CD8-positive, alpha-beta memory T cell (primary cell): ENCODE measurements at regions of chr1 and their contacts with region 1.

Region 1: DNA sequence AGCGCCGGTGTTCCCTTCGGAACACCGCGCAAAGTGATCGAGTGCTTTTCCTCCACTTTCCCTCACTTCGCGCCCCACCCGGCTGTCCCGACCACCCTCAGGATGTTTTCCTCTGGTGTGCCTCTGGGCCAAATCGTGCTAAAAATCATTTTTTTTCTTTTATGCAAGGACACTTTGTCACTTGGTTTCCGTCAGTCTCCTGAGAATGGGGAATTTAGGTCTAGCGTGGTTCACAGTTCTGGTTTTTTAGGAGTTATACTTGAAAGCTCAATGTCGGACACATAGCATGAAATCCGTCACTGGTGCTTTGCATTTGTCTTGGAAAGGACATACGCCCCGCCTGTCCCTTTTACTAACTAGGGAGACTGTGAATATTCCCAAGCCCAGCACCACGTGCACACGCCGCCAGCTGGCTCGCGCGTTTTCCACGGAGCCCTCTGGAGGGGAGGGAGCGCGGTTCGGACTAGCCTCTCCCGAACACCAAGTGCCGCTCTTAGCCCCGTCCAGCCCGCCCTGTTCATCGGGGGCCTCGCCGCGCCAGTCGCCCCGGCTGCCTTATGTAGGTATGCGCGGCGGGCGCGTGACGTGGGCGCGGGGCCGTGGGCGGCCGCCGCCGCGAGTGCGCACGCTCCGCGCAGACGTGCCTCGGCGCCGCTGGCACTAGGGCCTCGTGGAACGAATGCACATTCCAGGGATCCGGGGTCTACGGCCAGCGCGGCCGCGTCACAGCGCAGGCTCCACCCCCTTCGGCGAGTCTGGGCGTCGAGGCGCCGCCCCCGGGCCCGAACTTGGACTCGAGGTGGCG is 572 bp upstream of the IRF2BP2 start:
- DNase-seq: peak; percentile 85 to 94 (median 92)
- H3K4me3 ChIP-seq: peak overlapping the region; percentile 88
- H3K4me3 Mint-ChIP-seq: peak overlapping the region; percentile 90 to 99 (median 96)
- H3K27ac ChIP-seq: peak overlapping the region; percentile 96
- H3K27ac Mint-ChIP-seq: peak overlapping the region; percentile 95 to 100 (median 99)
- H3K4me1 ChIP-seq: peaks cover 52% of the 10 kb centered on the region
- H3K4me1 Mint-ChIP-seq: peaks cover 47 to 58% (median 57%) of the 10 kb centered on the region in 3 donors
- H3K27me3 ChIP-seq: no peaks in the 10 kb centered on the region
- H3K27me3 Mint-ChIP-seq: peaks cover 0 to 15% of the 10 kb centered on the region in 2 donors

Region 2: DNA sequence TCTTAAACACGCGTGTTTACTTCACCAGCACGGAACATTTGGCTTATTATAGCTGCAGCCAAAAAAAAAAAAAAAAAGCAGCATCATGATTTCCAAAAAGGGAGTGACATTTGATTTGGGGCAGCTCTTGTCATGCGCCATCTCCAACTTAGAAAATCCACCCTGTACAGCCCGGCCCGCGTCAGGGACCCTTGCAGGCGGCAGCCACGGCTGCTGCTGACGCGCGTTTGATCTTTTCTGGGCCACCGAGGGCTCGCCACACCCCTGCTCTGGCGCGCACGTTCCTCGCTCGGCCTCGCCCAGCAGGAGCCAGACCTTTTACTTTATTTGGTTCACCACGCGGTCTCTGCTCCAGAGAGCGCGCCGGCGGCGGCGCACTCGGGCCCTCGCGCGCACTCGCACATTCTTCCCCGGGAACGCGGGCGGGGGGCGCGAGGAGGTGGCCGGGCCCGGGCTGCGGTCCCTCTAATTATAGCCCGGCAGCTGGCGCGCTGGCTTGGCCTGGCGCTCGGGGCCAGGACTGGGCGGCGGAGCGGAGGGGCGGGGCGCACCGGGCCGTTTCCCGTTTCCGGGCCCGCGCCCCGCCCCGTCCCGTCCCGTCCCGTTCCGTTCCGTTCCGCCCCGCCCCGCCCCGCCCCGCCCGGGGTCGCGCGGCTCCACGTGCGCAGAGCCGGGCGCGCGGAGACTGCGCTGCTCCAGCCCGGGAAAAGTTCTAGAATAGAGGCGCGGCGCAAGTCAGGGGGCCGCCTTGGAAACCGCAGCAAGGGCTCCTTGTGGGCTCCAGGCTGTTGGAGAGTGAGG is 10.7 kb before region 1 on chr1:
- CTCF ChIA-PET with region 1: interaction called, 68 read pairs
- POLR2A ChIA-PET with region 1: interaction called, 101 read pairs
- DNase-seq: peak; percentile 72 to 86 (median 75)
- H3K4me3 ChIP-seq: peak overlapping the region; percentile 64
- H3K4me3 Mint-ChIP-seq: peak overlapping the region; percentile 87 to 90 (median 90)
- H3K27ac ChIP-seq: peak overlapping the region; percentile 95
- H3K27ac Mint-ChIP-seq: peak overlapping the region; percentile 93 to 99 (median 98)
- H3K4me1 ChIP-seq: peaks cover 59% of the 10 kb centered on the region
- H3K4me1 Mint-ChIP-seq: peaks cover 50 to 63% (median 58%) of the 10 kb centered on the region in 3 donors
- H3K27me3 ChIP-seq: no peaks in the 10 kb centered on the region
- H3K27me3 Mint-ChIP-seq: no peaks in the 10 kb centered on the region

Region 3: DNA sequence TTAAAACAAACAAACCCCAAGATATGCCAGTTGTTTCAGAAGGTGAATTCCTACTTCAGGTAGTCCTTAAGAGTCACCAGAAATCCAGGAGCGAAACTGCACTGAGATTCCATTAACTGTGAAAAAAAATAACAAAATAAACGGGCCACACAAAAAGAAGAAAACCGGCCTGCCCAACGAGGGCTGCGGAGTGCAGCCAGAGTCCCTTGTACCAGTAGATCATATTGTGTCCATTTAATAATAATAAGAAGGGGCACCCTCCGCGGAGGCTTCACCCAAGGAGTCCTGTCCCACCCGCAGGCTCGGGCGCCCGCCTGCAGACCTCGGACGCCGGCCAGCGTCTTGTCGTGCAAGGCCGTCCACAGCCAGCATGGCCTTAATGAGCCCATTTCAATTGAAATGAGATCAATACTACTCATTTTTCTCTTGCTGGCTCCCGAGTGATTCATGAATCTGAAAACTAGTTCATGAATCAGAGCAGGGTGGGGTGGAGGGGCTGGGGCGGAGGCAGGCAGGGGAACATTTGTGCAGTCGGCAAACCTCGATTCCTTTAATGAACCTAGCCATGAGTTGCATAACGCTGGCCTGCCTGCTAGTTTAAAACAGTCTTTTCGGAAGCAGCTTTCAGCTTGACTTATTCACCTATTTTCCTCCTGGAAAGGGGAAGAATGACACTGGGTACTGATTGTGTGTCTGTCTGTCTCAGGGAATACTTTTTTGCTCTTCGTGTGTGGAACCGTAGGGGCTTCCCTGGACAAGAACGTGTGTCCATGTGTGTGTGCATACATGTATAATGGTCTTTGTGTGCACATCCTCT is 112.6 kb after region 1 on chr1:
- CTCF ChIA-PET with region 1: no interaction called
- POLR2A ChIA-PET with region 1: interaction called, 61 read pairs
- DNase-seq: peak in 2 of 5 donors; percentile 15 to 70
- H3K4me3 ChIP-seq: peak overlapping the region; percentile 57
- H3K4me3 Mint-ChIP-seq: peak overlapping the region; percentile 69 to 92 (median 80)
- H3K27ac ChIP-seq: peak overlapping the region; percentile 96
- H3K27ac Mint-ChIP-seq: peak overlapping the region; percentile 90 to 100 (median 98)
- H3K4me1 ChIP-seq: peaks cover 63% of the 10 kb centered on the region
- H3K4me1 Mint-ChIP-seq: peaks cover 53 to 64% (median 61%) of the 10 kb centered on the region in 3 donors
- H3K27me3 ChIP-seq: no peaks in the 10 kb centered on the region
- H3K27me3 Mint-ChIP-seq: peaks cover 0 to 3% of the 10 kb centered on the region in 2 donors

Region 4: DNA sequence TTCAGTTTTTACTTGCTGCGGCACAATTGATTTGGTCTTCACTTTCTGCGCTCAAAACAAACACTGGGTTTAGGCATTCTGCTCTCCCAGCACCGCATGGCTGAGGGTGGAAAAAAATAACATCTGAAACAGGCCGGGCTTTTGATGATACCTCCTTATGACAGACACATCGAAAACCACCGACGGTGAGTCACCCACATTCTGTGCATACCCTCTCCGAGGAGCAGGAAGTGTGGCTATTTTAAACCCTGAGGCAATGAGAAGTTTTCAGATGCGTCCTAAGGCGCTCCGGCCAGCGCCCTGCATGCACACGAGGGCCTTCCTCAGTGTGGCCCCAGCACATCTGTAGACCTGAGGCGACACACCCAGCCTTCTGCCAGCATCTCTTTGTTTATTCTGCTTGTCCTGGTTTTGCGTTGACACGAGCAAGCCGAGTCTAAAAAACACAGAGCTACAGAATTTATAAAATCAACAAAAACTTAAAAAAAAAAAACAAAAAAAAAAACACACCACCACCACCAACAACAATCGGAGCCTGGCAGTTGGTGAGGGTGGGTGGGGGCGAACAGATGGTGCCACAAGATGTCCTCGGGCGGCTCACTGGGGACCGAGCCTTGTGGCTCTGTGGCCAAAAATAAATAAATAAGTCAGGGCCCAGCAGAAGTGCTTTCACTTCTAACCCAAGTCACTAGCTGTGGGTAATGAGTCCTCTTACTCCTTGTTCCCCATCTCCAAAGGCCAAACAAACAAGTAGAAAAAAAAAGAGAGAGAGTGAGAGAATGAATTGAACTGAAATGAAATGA is 162.0 kb after region 1 on chr1:
- CTCF ChIA-PET with region 1: interaction called, 5 read pairs
- POLR2A ChIA-PET with region 1: interaction called, 30 read pairs
- DNase-seq: peak; percentile 63 to 93 (median 81)
- H3K4me3 ChIP-seq: peak overlapping the region; percentile 16
- H3K4me3 Mint-ChIP-seq: peak overlapping the region; percentile 55 to 91 (median 81)
- H3K27ac ChIP-seq: peak overlapping the region; percentile 58
- H3K27ac Mint-ChIP-seq: peak overlapping the region; percentile 91 to 99 (median 95)
- H3K4me1 ChIP-seq: peaks cover 53% of the 10 kb centered on the region
- H3K4me1 Mint-ChIP-seq: peaks cover 51 to 62% (median 56%) of the 10 kb centered on the region in 3 donors
- H3K27me3 ChIP-seq: peaks cover 5% of the 10 kb centered on the region
- H3K27me3 Mint-ChIP-seq: no peaks in the 10 kb centered on the region

Region 5: GRCh38 chr1:235011599-235012435 is 401.3 kb after region 1 on chr1:
- CTCF ChIA-PET with region 1: interaction called, 3 read pairs
- POLR2A ChIA-PET with region 1: interaction called, 12 read pairs
- DNase-seq: peak; percentile 86 to 98 (median 93)
- H3K4me3 ChIP-seq: peak overlapping the region; percentile 60
- H3K4me3 Mint-ChIP-seq: peak overlapping the region; percentile 45 to 81 (median 74)
- H3K27ac ChIP-seq: peak overlapping the region; percentile 84
- H3K27ac Mint-ChIP-seq: peak overlapping the region; percentile 93 to 99 (median 96)
- H3K4me1 ChIP-seq: peaks cover 39% of the 10 kb centered on the region
- H3K4me1 Mint-ChIP-seq: peaks cover 44 to 74% (median 52%) of the 10 kb centered on the region in 3 donors
- H3K27me3 ChIP-seq: no peaks in the 10 kb centered on the region
- H3K27me3 Mint-ChIP-seq: peaks cover 0 to 3% of the 10 kb centered on the region in 2 donors